Dorsolateral prefrontal cortex (tissue), 120 donors: ENCODE measurements at regions of chr11 and their contacts with region 1.

Region 1: GRCh38 chr11:131064373-131064991 is 148.2 kb upstream of the SNX19 start:
- DNase-seq: peak; percentile 53 to 77 (median 67)
- H3K4me3 ChIP-seq: peak overlapping the region in 13 of 59 donors; percentile 8 to 34 (median 20)
- H3K27ac ChIP-seq: peak overlapping the region in 1 of 59 donors; percentile 36
- H3K27me3 ChIP-seq: peaks cover 0 to 7% (median 0%) of the 10 kb centered on the region in 45 donors
- CTCF ChIP-seq: peak in 55 of 56 donors; percentile 48 to 95 (median 87)

Region 2: DNA sequence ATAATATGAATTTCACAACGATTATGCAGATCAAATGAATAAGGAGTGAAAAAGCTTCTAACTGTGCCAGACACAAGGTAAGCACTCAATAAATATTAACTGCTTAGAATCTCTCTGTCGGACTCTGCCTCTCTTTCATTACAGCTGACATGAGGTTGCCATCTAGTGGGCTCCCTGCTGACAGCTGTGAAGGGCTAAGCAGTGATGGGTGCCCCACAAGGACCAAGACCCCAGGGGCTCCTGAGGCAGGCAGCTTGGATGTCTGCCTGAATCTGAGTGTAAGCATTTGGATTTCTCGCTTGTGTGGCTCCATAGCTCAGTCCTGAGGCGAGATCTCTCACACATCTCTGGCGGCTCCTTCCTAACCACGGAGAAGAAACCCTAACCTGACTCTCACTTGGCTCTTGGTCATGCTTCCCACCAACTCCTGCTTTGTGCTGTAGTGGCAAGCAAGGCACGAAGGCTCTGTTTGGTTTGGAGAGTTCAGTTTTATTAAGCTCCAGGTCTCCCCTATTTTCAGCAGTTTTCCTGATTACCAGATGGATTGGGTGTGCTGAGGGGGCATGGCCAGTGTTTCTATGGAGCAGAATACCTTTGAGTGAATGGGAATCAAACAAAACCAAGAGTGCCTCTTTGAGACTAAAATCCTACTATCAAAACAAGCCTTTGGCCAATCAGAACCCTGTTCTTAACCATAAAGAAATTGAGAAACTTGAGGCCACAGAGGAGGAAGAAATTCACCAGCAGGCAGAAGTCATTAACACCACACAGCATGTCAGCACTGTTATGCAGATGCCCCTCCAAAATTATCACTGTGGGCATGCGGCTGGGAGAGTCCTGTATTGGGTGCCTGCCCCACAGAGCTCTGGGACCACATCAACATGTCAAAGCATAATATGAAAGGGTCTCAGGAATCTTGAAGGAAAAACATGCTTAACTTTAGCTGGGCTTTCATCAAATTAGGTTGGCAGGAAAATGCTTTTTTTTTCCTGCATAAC is 153.1 kb after region 1 on chr11:
- intact Hi-C with region 1: loop called in 1 of 2 experiments (anchors 5 kb)
- DNase-seq: no peak
- H3K4me3 ChIP-seq: no peak overlapping the region
- H3K27ac ChIP-seq: no peak overlapping the region
- H3K27me3 ChIP-seq: peaks cover 0 to 15% (median 0%) of the 10 kb centered on the region in 45 donors
- CTCF ChIP-seq: peak in 46 of 56 donors; percentile 7 to 61 (median 28)

Region 3: GRCh38 chr11:131392528-131393255 is 328.2 kb after region 1 on chr11:
- intact Hi-C with region 1: loop called in 1 of 2 experiments (anchors 10 kb)
- DNase-seq: no peak
- H3K4me3 ChIP-seq: no peak overlapping the region
- H3K27ac ChIP-seq: peak overlapping the region in 3 of 59 donors; percentile 2 to 21 (median 17)
- H3K27me3 ChIP-seq: peaks cover 0 to 2% (median 0%) of the 10 kb centered on the region in 45 donors
- CTCF ChIP-seq: peak in 53 of 56 donors; percentile 18 to 69 (median 45)

Region 4: GRCh38 chr11:131504199-131504949 is 439.9 kb after region 1 on chr11:
- intact Hi-C with region 1: loop called in 1 of 2 experiments (anchors 2 kb)
- DNase-seq: peak; percentile 26 to 84 (median 76)
- H3K4me3 ChIP-seq: peak overlapping the region in 22 of 59 donors; percentile 3 to 41 (median 24)
- H3K27ac ChIP-seq: peak overlapping the region in 54 of 59 donors; percentile 2 to 86 (median 68)
- H3K27me3 ChIP-seq: no peaks in the 10 kb centered on the region
- CTCF ChIP-seq: peak; percentile 15 to 80 (median 65)

Region 5: DNA sequence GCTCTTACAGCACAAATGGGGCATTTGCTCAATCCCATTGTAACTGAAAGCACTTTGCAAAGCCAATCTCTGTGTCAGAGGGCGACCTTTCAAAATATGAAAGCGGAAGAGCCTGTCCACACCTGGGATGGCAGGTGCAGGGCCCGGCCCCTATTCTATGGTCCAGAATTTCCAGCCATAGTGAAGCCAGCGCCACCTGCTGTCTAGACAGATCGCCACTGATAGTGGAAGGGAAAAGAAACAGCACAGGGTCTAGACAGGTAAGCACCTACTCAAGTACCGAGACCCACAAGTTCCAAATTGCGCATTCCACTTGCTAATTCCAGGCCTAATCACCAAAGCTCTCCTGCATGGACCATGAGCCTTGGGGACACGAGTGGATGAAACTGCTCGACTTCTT is 447.3 kb after region 1 on chr11:
- intact Hi-C with region 1: loop called in 1 of 2 experiments (anchors 5 kb)
- DNase-seq: peak in 2 of 10 donors; percentile 14 to 43
- H3K4me3 ChIP-seq: no peak overlapping the region
- H3K27ac ChIP-seq: no peak overlapping the region
- H3K27me3 ChIP-seq: no peaks in the 10 kb centered on the region
- CTCF ChIP-seq: peak in 52 of 56 donors; percentile 16 to 71 (median 49)

Region 6: DNA sequence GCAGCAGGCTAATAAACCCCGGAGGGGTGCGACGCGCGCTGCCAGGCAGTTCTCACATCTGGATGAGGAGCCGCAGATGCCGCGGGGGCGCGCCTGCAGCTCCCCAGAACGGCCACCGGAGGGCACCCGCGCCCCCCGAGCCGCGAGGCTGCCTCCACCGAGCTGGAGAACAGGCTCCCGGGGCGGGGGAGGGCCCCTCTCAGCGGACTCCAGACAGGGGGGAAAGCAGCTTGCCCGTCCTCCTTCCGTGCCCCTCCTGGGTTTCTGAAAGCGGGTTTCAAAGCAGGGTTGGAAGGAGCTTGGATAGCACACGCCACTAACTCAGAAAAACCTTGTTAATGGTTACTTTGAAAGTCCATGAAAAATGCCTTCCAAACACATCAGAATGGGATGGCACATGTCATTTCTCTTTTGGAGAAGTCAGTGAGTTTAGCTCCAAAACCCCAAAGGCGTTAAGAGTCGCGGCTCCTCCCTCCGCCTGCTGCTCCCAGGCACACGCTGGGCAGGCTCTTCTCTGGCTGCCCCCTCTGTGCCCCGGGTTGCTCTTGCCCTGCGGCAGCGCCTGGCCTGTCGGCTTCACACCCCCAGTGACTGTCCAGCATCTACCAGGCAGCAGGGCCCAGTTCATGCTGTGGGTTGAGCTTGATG is 623.7 kb after region 1 on chr11:
- intact Hi-C with region 1: loop called in 1 of 2 experiments (anchors 5 kb)
- DNase-seq: peak; percentile 63 to 90 (median 74)
- H3K4me3 ChIP-seq: peak overlapping the region in 52 of 59 donors; percentile 3 to 62 (median 39)
- H3K27ac ChIP-seq: peak overlapping the region in 2 of 59 donors; percentile 10 to 41
- H3K27me3 ChIP-seq: no peaks in the 10 kb centered on the region
- CTCF ChIP-seq: peak; percentile 67 to 96 (median 88)